Right lobe of liver (tissue), 6 donors: ENCODE measurements at regions of chr6 and their contacts with region 1.

Region 1: DNA sequence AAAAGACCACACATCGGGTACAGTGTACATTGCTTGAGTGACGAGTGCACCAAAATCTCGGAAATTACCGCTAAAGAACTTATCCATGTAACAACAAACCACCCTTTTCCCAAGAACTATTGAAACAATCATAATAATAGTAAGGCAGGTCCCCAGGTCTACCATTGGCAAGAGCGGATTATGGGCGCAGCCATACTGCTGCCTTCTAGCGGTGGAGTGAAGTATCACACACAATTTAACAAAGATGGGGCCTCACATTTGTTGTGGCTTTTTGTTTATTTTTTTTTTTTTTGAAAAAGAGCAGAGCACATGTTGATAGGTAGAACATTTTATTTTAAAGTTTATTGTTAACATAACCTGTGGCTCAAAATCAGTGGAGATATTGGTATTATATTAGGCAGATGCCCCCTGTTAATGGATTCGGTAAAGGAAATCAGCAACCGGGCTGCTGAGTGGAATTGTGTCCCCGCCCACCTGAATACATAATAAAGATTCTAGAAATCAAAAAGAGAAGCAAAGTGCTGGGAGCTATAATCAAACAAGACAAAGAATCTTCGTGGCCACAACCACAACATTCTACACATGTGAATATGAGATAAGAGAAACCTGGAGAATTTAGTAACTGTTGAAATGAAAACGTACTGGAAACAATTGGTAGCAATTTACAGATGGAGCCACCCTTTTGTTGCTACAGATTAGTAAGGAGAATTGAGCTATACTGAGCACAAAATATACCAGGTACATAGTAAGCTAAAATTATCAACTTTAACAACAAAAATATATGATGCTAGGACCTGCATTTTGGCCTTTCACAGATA is 94.2 kb upstream of the EXOC2 start:
- DNase-seq: no peak
- ATAC-seq: peak; percentile 66 to 72 (median 68)
- H3K4me3 ChIP-seq: no peak overlapping the region
- H3K27ac ChIP-seq: no peak overlapping the region
- H3K4me1 ChIP-seq: no peaks in the 10 kb centered on the region
- H3K27me3 ChIP-seq: no peaks in the 10 kb centered on the region
- CTCF ChIP-seq: peak; percentile 50 to 64 (median 58)
- POLR2A ChIP-seq: no peak

Region 2: DNA sequence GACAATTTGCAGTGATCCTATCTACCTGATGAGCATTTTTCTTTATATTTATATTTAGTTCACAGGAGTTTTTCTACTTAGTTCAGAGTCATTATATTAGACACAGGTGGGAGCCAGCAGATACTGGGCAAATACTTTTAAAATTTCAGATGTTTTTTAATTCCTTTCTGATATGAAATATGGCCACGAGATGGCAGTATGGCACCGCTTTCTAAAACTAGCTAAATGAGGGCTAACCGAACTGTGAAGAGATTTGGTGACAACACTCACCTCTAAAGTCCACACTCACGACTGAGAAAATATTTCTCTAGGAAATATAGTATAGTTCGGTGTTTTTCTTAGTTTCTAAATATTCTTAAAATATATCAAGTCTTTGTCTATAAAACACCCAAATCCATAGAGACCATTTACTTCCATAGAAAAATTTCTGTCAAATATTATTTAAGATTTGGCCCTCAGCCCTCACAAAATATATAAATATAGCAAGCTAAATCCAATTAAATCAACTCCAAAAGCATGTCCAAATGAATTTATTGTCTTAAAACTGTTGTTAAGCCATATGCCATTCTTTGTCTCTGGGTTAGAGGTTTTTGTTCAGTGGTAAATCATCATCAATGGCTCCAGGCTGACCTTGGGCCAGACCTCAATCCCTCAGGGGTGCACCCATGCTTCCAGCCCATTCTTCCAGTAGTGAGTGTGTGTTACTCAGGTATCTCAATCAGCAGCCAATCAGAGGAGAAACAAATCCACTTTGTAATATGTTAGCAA is 193.8 kb before region 1 on chr6:
- intact Hi-C with region 1: loop called in 1 of 2 experiments (anchors 10 kb)
- DNase-seq: peak in 1 of 3 donors; percentile 63
- ATAC-seq: peak; percentile 71 to 82 (median 76)
- H3K4me3 ChIP-seq: no peak overlapping the region
- H3K27ac ChIP-seq: no peak overlapping the region
- H3K4me1 ChIP-seq: no peaks in the 10 kb centered on the region
- H3K27me3 ChIP-seq: no peaks in the 10 kb centered on the region
- CTCF ChIP-seq: peak; percentile 70 to 79 (median 70)
- POLR2A ChIP-seq: no peak

Region 3: GRCh38 chr6:1024587-1024986 is 237.4 kb after region 1 on chr6:
- intact Hi-C with region 1: no loop called
- DNase-seq: no peak
- ATAC-seq: peak in 1 of 4 donors; percentile 36
- H3K4me3 ChIP-seq: no peak overlapping the region
- H3K27ac ChIP-seq: no peak overlapping the region
- H3K4me1 ChIP-seq: no peaks in the 10 kb centered on the region
- H3K27me3 ChIP-seq: no peaks in the 10 kb centered on the region
- CTCF ChIP-seq: no peak
- POLR2A ChIP-seq: no peak

Region 4: GRCh38 chr6:1396952-1397868 is 610.1 kb after region 1 on chr6:
- intact Hi-C with region 1: loop called in 1 of 2 experiments (anchors 10 kb)
- DNase-seq: peak in 2 of 3 donors; percentile 54 to 58
- ATAC-seq: peak; percentile 60 to 82 (median 78)
- H3K4me3 ChIP-seq: no peak overlapping the region
- H3K27ac ChIP-seq: no peak overlapping the region
- H3K4me1 ChIP-seq: peaks cover 0 to 13% (median 0%) of the 10 kb centered on the region in 4 donors
- H3K27me3 ChIP-seq: peaks cover 0 to 34% of the 10 kb centered on the region in 2 donors
- CTCF ChIP-seq: peak; percentile 66 to 99 (median 95)
- POLR2A ChIP-seq: no peak